Breast epithelium (tissue), 4 donors: ENCODE measurements at regions of chr7 and their contacts with region 1.

Region 1: GRCh38 chr7:47047384-47047783 is 534.5 kb downstream of the TNS3 start:
- DNase-seq: no peak
- H3K4me3 ChIP-seq: no peak overlapping the region
- H3K27ac ChIP-seq: no peak overlapping the region
- H3K4me1 ChIP-seq: peaks cover 0 to 20% of the 10 kb centered on the region in 2 donors
- H3K27me3 ChIP-seq: no peaks in the 10 kb centered on the region
- CTCF ChIP-seq: no peak
- POLR2A ChIP-seq: no peak

Region 2: GRCh38 chr7:45985902-45986301 is 1061.5 kb before region 1 on chr7:
- intact Hi-C with region 1: no loop called
- DNase-seq: no peak
- H3K4me3 ChIP-seq: no peak overlapping the region
- H3K27ac ChIP-seq: no peak overlapping the region
- H3K4me1 ChIP-seq: peaks cover 0 to 8% of the 10 kb centered on the region in 2 donors
- H3K27me3 ChIP-seq: no peaks in the 10 kb centered on the region
- CTCF ChIP-seq: no peak
- POLR2A ChIP-seq: no peak

Region 3: DNA sequence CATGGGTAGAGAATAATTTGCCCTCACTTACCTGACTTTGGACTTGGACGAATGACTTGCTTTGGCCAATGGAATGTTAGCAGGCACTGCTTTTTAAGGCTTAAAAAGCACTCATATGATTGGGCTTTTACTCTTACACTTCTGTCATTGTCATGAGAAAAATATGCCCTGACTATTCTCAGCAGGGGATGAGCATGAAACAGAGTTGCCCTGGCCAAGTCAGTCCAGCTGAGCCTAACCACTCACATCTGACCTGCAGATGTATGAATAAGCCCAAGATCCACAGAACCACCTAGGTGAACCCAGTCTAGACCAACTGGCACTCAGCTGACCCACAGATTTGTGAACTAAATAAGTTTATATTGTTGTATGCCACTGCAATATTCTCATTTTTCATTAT is 38.9 kb before region 1 on chr7:
- intact Hi-C with region 1: loop called (anchors 2 kb)
- DNase-seq: no peak
- H3K4me3 ChIP-seq: no peak overlapping the region
- H3K27ac ChIP-seq: no peak overlapping the region
- H3K4me1 ChIP-seq: no peaks in the 10 kb centered on the region
- H3K27me3 ChIP-seq: no peaks in the 10 kb centered on the region
- CTCF ChIP-seq: no peak
- POLR2A ChIP-seq: no peak

Region 4: GRCh38 chr7:47074702-47075153 is 27.3 kb after region 1 on chr7:
- intact Hi-C with region 1: no loop called
- DNase-seq: no peak
- H3K4me3 ChIP-seq: no peak overlapping the region
- H3K27ac ChIP-seq: no peak overlapping the region
- H3K4me1 ChIP-seq: no peaks in the 10 kb centered on the region
- H3K27me3 ChIP-seq: no peaks in the 10 kb centered on the region
- CTCF ChIP-seq: no peak
- POLR2A ChIP-seq: no peak

Region 5: GRCh38 chr7:47693120-47693601 is 645.8 kb after region 1 on chr7:
- intact Hi-C with region 1: no loop called
- DNase-seq: no peak
- H3K4me3 ChIP-seq: no peak overlapping the region
- H3K27ac ChIP-seq: no peak overlapping the region
- H3K4me1 ChIP-seq: no peaks in the 10 kb centered on the region
- H3K27me3 ChIP-seq: no peaks in the 10 kb centered on the region
- CTCF ChIP-seq: no peak
- POLR2A ChIP-seq: no peak